Right ventricle myocardium superior (tissue), 1 donor: ENCODE measurements at regions of chr1 and their contacts with region 1.

Region 1: DNA sequence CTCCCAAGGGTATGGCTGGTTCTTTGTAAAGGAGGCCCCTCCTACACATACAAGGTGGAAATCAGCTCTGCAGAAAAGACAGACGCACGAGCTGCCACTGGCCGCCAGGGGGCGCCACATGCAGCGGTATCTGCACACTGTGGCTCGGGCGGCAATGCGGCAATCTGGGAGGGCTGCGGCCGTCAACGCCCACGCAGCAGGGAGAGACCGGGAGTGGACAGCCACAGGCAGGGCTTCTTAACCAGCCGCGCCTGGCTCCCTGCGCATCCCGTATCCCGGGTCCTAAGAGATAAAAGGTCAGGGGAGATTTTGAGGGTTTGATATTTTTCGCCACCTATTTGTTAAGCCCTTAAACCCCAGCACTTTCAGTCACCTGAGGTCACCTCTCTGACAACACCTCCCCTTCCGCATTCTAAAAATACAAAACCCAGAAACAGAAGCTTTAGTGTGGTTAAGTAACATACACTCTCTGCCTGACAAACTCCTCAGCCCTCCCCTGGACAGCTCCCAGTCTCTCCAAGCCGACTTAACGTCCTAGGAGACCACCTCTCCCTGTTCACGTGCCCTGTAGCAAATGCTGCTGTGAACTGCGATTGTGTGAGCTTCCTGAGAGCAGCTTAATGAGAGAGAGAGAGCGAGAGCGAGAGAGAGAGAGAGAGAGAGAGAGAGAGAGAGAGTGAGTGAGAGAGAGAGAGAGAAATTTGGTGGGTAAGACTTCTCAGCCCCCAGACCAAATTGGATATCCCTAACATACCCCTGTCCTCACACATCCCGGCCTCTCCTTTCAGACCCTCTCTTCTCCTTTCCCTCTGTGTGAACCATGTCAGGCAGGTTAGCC is 13.5 kb upstream of the KCNA2 start:
- DNase-seq: peak; percentile 91
- ATAC-seq: peak; percentile 95

Region 2: GRCh38 chr1:110554871-110555801 is 64.5 kb before region 1 on chr1:
- intact Hi-C with region 1: loop called (anchors 2 kb)
- DNase-seq: peak; percentile 69
- ATAC-seq: peak; percentile 93